Activated T-helper 2 cell treated with anti-CD3 and anti-CD28 coated beads, Interferon-gamma antibody, Interleukin-2, Interleukin-4, amounts not matched to agents 10 μg/mL and 5 μg/mL and 100 μg/mL, durations not matched to agents 14 hours and 24 hours and 36 hours (primary cell): ENCODE measurements at regions of chr5 and their contacts with region 1.

Region 1: GRCh38 chr5:179623003-179623880 is at the start of gene HNRNPH1:
- DNase-seq: peak; percentile 98
- H3K4me3 Mint-ChIP-seq: peak within 1 kb of the TSS; percentile 98
- H3K27ac Mint-ChIP-seq: peak within 1 kb of the TSS; percentile 99
- H3K4me1 Mint-ChIP-seq: peaks cover 38% of the 10 kb centered on the region
- H3K27me3 Mint-ChIP-seq: no peaks in the 10 kb centered on the region
- total RNA-seq, gene HNRNPH1: 1,015 and 1,039 TPM in 2 replicates

Region 2: GRCh38 chr5:179313849-179314521 is 309.3 kb before region 1 on chr5:
- intact Hi-C with region 1: no loop called
- DNase-seq: no peak
- H3K4me3 Mint-ChIP-seq: no peak overlapping the region
- H3K27ac Mint-ChIP-seq: no peak overlapping the region
- H3K4me1 Mint-ChIP-seq: no peaks in the 10 kb centered on the region
- H3K27me3 Mint-ChIP-seq: no peaks in the 10 kb centered on the region

Region 3: DNA sequence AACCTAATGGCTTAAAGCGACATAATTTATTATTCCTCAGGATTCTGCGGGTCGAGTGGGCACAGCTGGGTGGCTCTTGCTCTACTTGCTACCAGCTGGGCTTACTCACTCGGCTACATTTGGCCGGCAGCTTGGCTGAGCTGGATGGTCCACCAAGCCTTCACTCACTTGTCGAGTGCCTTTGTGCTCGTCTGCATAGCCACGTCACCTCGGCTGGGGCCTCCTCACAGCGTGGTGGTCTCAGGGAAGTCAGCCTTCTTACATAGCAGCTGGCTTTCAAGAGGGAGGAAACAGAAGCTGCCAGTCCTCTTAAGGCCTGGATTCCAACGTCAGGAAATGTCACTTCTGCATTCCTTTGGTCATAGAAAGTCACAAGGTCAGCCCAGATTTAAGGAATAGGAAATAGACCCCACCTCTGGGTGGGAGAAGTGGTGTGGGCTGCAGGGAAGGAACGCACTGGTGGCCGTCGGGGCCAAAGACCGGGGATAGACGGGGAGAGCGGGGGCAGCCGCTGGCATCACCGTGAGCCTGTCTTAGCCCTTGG is 148.0 kb before region 1 on chr5:
- intact Hi-C with region 1: no loop called
- DNase-seq: no peak
- H3K4me3 Mint-ChIP-seq: no peak overlapping the region
- H3K27ac Mint-ChIP-seq: no peak overlapping the region
- H3K4me1 Mint-ChIP-seq: no peaks in the 10 kb centered on the region
- H3K27me3 Mint-ChIP-seq: peaks cover 9% of the 10 kb centered on the region

Region 4: GRCh38 chr5:179550511-179551230 is 72.6 kb before region 1 on chr5 and contains the start of gene RUFY1:
- intact Hi-C with region 1: loop called (anchors 2 kb)
- DNase-seq: peak; percentile 82
- H3K4me3 Mint-ChIP-seq: peak within 1 kb of the TSS; percentile 98
- H3K27ac Mint-ChIP-seq: peak within 1 kb of the TSS; percentile 100
- H3K4me1 Mint-ChIP-seq: peaks cover 22% of the 10 kb centered on the region
- H3K27me3 Mint-ChIP-seq: no peaks in the 10 kb centered on the region
- total RNA-seq, gene RUFY1: 40.2 and 42.0 TPM in 2 replicates

Region 5: GRCh38 chr5:179643556-179643955 is 20.3 kb after region 1 on chr5:
- intact Hi-C with region 1: no loop called
- DNase-seq: no peak
- H3K4me3 Mint-ChIP-seq: no peak overlapping the region
- H3K27ac Mint-ChIP-seq: no peak overlapping the region
- H3K4me1 Mint-ChIP-seq: no peaks in the 10 kb centered on the region
- H3K27me3 Mint-ChIP-seq: no peaks in the 10 kb centered on the region

Region 6: GRCh38 chr5:179678223-179679013 is 55.2 kb after region 1 on chr5:
- intact Hi-C with region 1: loop called (anchors 1 kb)
- DNase-seq: peak; percentile 93
- H3K4me3 Mint-ChIP-seq: peak overlapping the region; percentile 96
- H3K27ac Mint-ChIP-seq: peak overlapping the region; percentile 96
- H3K4me1 Mint-ChIP-seq: peaks cover 27% of the 10 kb centered on the region
- H3K27me3 Mint-ChIP-seq: no peaks in the 10 kb centered on the region

Region 7: DNA sequence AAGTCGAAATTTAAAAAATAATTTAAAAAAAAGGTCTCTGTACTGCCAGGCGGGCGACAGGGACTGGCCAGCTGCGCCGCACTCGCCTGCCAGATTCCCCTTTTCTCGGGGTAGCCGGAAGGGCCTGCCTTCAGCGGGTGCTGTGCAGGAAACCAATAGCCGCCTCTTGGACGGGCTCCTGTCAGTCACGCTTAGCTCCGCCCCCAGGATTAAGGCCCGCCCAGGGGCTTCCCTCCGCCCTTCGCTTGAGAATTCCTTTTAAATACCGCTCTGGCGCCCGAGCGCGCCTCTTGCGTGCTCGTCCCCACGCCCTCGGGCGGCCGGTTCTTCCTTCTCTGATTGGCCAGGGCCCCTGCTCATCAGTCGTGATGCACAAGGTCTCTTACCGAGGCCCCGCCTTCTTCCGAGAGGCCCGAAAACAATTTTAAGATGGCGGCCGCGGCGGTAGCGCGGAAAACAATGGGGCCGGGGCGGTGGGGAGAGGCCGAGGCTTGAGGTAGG is 109.2 kb after region 1 on chr5 and contains the start of gene MAML1:
- intact Hi-C with region 1: loop called (anchors 1 kb)
- DNase-seq: peak; percentile 100
- H3K4me3 Mint-ChIP-seq: peak within 1 kb of the TSS; percentile 94
- H3K27ac Mint-ChIP-seq: peak within 1 kb of the TSS; percentile 88
- H3K4me1 Mint-ChIP-seq: peaks cover 23% of the 10 kb centered on the region
- H3K27me3 Mint-ChIP-seq: no peaks in the 10 kb centered on the region
- total RNA-seq, gene MAML1: 38.1 and 38.3 TPM in 2 replicates

Region 8: DNA sequence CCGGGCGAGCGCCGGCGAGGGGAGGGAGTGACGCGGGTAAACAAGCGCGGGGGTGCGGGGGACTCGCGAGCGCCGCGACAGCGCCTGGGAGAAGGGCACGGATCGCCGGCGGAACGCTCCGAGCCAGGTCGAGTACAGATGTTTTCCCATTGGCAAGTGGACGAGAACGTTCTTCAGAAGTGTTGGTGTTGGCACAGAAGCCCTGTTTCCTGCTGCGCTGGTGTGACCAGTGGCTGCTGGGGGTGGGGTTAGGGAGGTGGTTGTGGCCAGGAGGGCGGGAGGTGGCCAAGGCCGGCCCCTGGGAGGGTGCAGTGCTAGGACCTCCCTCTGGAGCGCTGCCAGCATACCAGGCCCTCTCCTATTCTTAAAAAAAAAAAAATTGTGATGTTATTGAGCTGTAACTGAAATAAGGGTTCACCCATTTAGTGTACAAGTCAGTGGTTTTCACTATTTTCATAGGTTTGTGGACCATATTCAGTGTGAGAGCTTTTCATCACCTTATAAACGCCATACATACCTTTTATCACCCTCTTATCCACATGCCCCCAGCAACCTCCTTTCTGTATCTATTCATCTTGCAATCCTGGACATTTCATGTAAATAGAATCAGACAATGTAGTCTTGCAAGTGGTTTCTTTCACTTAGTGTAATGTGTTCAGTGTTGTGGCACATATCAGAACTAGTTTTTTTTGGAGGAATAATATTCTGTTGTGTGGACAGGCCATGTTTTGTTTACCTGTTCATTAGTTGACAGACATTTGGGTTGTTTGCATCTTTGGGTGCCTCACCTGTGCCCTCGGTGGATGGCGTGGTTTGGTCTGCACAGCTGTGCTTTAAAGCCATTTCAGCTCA is 198.6 kb after region 1 on chr5:
- intact Hi-C with region 1: loop called (anchors 5 kb)
- DNase-seq: peak; percentile 83
- H3K4me3 Mint-ChIP-seq: peak overlapping the region; percentile 91
- H3K27ac Mint-ChIP-seq: peak overlapping the region; percentile 93
- H3K4me1 Mint-ChIP-seq: peaks cover 31% of the 10 kb centered on the region
- H3K27me3 Mint-ChIP-seq: no peaks in the 10 kb centered on the region

Region 9: DNA sequence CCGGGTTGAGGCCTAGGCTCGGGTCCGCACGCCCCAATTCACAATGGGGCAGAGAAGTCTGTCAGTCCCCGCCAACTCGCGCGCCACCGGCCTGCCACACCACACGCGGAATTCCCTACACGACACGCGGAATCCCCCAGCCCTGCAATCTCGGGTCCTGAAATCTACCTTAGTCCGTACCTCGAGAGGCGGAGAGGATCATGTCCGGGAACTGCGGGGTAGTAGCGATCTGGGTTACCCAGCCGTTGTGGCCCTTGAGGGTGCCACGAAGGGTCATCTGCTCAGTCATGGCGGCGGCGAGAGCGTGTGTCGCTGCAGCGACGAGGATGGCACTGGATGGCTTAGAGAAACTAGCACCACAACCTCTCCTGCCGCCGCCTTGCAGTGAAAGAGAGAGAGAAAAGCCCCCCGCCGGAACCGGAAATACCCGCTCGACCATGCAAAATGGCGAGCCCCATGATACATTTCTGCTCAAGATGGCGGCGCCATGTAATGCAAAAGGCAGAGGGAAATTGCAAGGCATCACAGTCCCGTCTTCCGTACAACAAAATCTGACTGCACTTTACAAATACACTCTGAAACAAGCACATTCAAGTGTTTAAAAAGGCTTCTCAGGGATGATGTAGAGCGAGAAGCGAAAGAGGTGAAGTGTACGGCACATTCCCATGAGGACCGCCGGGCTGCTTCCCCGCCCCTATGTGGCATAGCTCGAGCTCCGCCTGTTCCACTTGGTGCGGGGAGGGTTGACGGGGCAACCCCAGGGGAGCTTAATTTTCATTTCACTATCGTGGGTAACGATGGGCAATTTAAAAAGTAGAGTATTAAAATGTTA is 1620.5 kb after region 1 on chr5 and contains the start of gene RACK1:
- intact Hi-C with region 1: loop called (anchors 10 kb)
- DNase-seq: peak; percentile 85
- H3K4me3 Mint-ChIP-seq: peak within 1 kb of the TSS; percentile 98
- H3K27ac Mint-ChIP-seq: peak within 1 kb of the TSS; percentile 99
- H3K4me1 Mint-ChIP-seq: peaks cover 39% of the 10 kb centered on the region
- H3K27me3 Mint-ChIP-seq: no peaks in the 10 kb centered on the region
- total RNA-seq, gene RACK1: 2,110 and 2,123 TPM in 2 replicates